Kidney (tissue), 22 donors: ENCODE measurements at regions of chr2 and their contacts with region 1.

Region 1: DNA sequence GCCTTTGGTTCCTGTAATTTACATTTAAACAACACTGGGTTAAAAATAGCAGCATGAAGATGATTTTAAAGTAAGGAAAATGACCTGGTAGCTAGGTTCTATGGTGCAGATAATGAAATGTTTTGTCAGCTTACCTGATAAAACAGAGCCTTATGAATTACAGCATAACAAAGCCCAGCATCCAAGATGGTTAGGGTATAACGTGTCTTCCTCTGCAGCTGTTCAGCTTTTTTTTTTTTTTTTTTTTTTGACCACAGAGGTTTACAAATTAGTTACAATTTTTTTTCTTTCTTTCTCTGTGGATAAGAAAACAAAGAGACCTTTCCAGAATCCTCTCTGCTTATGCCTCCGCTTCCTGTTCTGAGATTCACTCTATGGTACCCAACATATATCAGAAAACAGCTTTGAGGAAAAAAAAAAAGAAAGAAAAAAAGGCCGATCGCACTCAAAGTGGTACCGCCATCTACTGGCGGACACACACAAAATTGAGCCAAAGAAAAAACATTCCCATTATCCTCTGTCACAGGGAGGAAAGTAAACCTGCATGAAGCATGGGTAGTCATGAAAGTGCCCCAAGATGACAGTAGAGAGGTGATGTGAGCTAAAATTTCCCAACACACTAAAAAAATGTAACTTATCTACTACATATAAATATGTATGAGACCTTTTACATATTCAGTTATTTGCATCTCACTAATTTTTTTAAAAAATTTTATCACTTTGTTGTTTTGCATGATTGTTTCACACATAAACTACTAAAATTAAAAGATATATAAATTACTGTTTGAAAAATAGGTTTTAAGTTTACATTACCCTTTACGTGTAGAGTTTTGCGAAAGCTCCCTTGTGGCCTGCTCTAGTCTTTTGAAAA is at the start of gene SCN3A:
- DNase-seq: peak in 4 of 5 donors; percentile 26 to 68 (median 44)
- H3K4me3 ChIP-seq: peak within 1 kb of the TSS in 1 of 3 donors; percentile 18
- H3K27ac ChIP-seq: no peak within 1 kb of the TSS
- H3K4me1 ChIP-seq: no peaks in the 10 kb centered on the region
- H3K27me3 ChIP-seq: no peaks in the 10 kb centered on the region
- CTCF ChIP-seq: peak; percentile 60
- total RNA-seq, gene SCN3A: 6.3 TPM

Region 2: GRCh38 chr2:165015052-165015642 is 188.8 kb before region 1 on chr2:
- intact Hi-C with region 1: loop called (anchors 10 kb)
- DNase-seq: peak; percentile 55 to 82 (median 70)
- H3K4me3 ChIP-seq: no peak overlapping the region
- H3K27ac ChIP-seq: no peak overlapping the region
- H3K4me1 ChIP-seq: no peaks in the 10 kb centered on the region
- H3K27me3 ChIP-seq: peaks cover 2% of the 10 kb centered on the region
- CTCF ChIP-seq: peak; percentile 81

Region 3: DNA sequence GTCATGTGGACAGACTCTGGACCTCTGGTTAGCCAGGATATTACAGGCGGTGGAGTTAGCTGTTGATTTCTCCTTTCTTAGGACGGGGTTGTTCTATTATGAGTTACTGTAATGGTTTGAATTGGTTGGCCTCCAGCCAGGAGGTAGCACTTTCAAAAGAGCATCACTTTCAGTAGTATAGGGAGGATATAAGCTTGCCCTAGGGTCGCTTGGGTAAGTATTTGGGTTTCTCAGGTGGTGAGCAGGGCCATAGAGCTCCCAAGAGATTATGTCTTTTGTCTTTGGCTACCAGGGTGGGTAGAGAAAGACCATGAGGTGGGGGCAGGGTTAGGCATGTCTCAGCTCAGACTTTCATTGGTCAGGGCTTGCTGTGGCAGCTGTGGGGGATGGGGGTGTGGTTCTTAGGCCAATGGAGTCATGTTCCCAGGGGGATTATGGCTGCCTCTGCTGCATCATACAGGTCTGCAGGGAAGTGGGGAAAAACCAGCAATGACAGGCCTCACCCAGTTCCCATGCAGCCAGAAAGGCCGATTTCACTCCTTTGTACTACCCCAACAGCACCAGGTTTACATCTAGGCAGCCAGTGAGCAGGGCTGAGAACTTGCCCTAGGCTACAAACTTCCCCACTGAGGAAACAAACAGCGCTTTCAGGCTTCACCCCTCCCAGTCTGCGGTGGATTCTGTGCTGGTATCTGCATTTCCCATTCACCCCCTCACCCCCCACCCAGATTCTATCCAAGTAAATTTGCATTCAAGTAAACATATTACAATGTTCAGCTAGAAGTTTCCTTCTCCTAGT is 159.2 kb before region 1 on chr2:
- intact Hi-C with region 1: no loop called
- DNase-seq: no peak
- H3K4me3 ChIP-seq: no peak overlapping the region
- H3K27ac ChIP-seq: no peak overlapping the region
- H3K4me1 ChIP-seq: no peaks in the 10 kb centered on the region
- H3K27me3 ChIP-seq: no peaks in the 10 kb centered on the region
- CTCF ChIP-seq: no peak

Region 4: DNA sequence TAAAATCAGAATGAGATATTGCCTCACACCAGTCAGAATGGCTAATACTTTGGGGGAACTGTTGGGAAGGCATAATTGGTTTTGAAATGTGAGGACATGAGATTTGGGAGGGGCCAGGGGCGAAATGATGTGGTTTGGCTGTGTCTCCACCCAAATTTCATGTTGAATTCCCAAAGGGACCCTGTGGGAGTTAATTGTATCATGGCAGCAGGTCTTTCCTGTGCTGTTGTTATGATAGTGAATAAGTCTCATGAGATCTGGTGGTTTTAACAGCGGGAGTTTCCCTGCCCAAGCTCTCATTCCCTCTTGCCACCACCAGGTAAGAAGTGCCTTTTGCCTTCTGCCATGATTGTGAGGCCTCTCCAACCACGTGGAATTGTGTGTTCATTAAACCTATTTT is 325.2 kb after region 1 on chr2:
- intact Hi-C with region 1: no loop called
- DNase-seq: no peak
- H3K4me3 ChIP-seq: no peak overlapping the region
- H3K27ac ChIP-seq: no peak overlapping the region
- H3K4me1 ChIP-seq: no peaks in the 10 kb centered on the region
- H3K27me3 ChIP-seq: no peaks in the 10 kb centered on the region
- CTCF ChIP-seq: no peak